CD4-positive, alpha-beta T cell (primary cell): ENCODE measurements at regions of chr14 and their contacts with region 1.

Region 1: GRCh38 chr14:95196290-95196689 is 39.0 kb upstream of the DICER1 start:
- DNase-seq: peak in 3 of 14 experiments; percentile 32 to 47 (median 43)
- ATAC-seq: peak; percentile 59
- H3K4me3 ChIP-seq: no peak overlapping the region
- H3K4me3 Mint-ChIP-seq: no peak overlapping the region
- H3K27ac ChIP-seq: no peak overlapping the region
- H3K27ac Mint-ChIP-seq: no peak overlapping the region
- H3K4me1 ChIP-seq: peaks cover 3% of the 10 kb centered on the region
- H3K4me1 Mint-ChIP-seq: no peaks in the 10 kb centered on the region
- H3K27me3 ChIP-seq: no peaks in the 10 kb centered on the region
- H3K27me3 Mint-ChIP-seq: no peaks in the 10 kb centered on the region
- CTCF ChIP-seq: peak; percentile 57

Region 2: GRCh38 chr14:94689218-94689984 is 506.9 kb before region 1 on chr14:
- CTCF ChIA-PET with region 1: no interaction called
- POLR2A ChIA-PET with region 1: no interaction called
- intact Hi-C with region 1: loop called (anchors 2 kb)
- DNase-seq: peak in 13 of 14 experiments; percentile 4 to 58 (median 25)
- ATAC-seq: no peak
- H3K4me3 ChIP-seq: no peak overlapping the region
- H3K4me3 Mint-ChIP-seq: no peak overlapping the region
- H3K27ac ChIP-seq: no peak overlapping the region
- H3K27ac Mint-ChIP-seq: no peak overlapping the region
- H3K4me1 ChIP-seq: peaks cover 7% of the 10 kb centered on the region
- H3K4me1 Mint-ChIP-seq: no peaks in the 10 kb centered on the region
- H3K27me3 ChIP-seq: peaks cover 5 to 13% of the 10 kb centered on the region in 2 experiments
- H3K27me3 Mint-ChIP-seq: peaks cover 11% of the 10 kb centered on the region
- CTCF ChIP-seq: peak; percentile 69

Region 3: DNA sequence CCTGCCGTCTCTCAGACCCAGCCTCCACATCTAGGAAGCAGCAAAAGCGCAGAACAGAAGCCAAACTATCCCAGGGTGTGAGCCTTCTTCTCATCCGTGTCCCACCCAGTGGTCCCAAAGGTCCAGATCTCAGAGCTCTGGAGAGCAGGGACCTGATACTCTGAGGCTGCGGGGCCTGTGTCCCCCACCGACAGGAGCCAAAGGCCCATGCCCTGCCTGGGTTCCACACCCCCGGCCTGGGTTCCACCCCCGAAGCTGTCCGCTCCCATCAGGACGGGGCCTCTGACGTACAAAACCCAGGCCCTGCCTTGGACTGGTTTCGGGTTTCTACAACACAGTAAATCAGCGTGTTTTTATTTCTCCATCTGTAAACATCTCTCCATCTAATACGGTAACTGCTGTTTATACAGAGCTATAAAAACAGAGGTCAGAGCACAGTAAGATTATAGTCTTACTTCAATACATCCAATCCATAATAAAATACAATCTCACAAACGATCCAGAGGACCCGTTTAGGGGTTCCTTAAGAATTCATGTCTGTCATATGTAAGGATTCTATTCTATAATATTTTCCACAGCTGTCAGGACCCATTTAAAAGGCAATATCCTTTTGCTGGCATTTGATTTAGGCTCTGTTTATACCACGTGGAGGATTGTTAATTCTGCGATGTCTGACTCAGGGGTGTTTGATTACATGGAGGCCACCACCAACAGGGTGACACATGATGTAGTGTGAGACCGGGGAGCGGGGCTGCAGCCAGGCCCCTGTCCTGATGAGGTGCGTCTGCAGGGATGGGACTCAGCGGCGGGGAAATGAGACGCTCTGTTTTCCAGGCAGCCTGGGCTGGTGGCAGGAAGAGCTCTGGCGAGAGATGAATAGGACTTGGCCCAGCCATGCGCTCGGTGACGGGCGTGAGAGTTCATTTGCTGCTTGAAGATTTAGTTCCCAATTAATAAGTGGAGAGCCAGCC is 149.3 kb before region 1 on chr14:
- CTCF ChIA-PET with region 1: no interaction called
- POLR2A ChIA-PET with region 1: no interaction called
- intact Hi-C with region 1: no loop called
- DNase-seq: peak in 1 of 14 experiments; percentile 19
- ATAC-seq: no peak
- H3K4me3 ChIP-seq: no peak overlapping the region
- H3K4me3 Mint-ChIP-seq: no peak overlapping the region
- H3K27ac ChIP-seq: no peak overlapping the region
- H3K27ac Mint-ChIP-seq: no peak overlapping the region
- H3K4me1 ChIP-seq: no peaks in the 10 kb centered on the region
- H3K4me1 Mint-ChIP-seq: no peaks in the 10 kb centered on the region
- H3K27me3 ChIP-seq: peaks cover 0 to 5% of the 10 kb centered on the region in 2 experiments
- H3K27me3 Mint-ChIP-seq: peaks cover 25% of the 10 kb centered on the region
- CTCF ChIP-seq: no peak

Region 4: DNA sequence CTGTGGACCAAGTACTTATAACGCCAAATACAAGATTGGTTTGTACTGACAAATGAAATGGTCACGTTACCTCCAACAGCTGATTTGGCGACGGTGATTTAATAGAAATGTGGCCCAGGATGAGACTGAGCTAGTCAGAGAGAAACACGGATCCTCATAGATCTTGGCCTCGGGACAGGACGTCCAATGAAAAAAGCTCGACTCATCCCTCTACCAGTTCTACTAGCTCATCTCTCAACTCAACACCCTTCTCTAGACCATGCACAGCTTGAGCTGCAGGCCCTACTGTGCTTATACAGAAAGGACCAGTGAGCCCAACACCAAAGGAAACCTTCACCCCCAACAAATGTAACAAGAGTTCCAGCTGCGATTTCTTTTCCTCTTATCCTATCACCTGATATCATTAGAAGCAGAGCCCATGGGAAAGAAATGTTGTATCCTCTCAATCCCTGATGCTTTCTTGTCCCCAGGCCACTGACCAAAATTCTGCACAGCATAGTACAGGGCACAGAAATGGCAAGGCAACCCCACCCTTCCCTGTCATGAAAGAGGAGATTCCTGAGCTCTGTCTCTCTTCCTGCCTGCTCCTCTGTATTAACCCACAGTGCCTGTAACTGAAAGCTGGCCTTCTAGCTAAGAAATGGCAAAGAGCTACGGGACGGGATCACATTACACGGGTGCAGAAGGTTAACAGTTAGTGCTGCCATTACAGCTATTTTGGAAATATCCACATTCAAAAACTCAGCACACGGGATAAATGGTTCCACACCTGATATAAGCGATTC is 78.2 kb before region 1 on chr14:
- CTCF ChIA-PET with region 1: no interaction called
- POLR2A ChIA-PET with region 1: no interaction called
- intact Hi-C with region 1: loop called in 1 of 2 experiments (anchors 10 kb)
- DNase-seq: no peak
- ATAC-seq: no peak
- H3K4me3 ChIP-seq: no peak overlapping the region
- H3K4me3 Mint-ChIP-seq: no peak overlapping the region
- H3K27ac ChIP-seq: no peak overlapping the region
- H3K27ac Mint-ChIP-seq: no peak overlapping the region
- H3K4me1 ChIP-seq: no peaks in the 10 kb centered on the region
- H3K4me1 Mint-ChIP-seq: peaks cover 33% of the 10 kb centered on the region
- H3K27me3 ChIP-seq: no peaks in the 10 kb centered on the region
- H3K27me3 Mint-ChIP-seq: no peaks in the 10 kb centered on the region
- CTCF ChIP-seq: no peak